ENCODE measurements at regions of chr5 and their contacts with region 1.

Region 1: GRCh38 chr5:126506079-126506478 is 82.9 kb downstream of the GRAMD2B start:
- DNase-seq: peak in 1 of 2 donors; percentile 37
- ATAC-seq: peak in 7 of 8 donors; percentile 39 to 84 (median 57)
- H3K4me3 ChIP-seq: no peak overlapping the region
- H3K27ac ChIP-seq: peak overlapping the region; percentile 28 to 85 (median 65)
- H3K4me1 ChIP-seq: peaks cover 0 to 45% (median 28%) of the 10 kb centered on the region in 9 donors
- H3K27me3 ChIP-seq: no peaks in the 10 kb centered on the region
- CTCF ChIP-seq: no peak

Region 2: DNA sequence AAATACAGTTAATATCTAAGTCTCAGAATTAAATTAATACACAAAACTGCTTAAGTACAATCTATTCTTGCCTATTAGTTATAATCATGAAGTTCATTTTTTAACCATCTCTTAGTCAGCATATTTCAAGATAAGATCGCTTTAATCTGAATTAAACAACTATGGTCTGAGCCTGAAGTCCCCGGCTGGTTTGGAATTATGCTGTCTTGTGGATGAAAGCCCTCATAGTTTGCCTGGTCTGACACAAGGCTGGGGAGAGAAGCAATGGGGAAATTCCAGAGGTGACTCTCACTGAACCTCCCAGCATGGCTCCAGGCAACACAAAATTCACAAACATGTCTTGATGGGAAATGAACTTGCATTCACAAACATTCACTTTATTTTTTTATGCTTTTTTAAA is 110.9 kb before region 1 on chr5:
- intact Hi-C with region 1: no loop called
- DNase-seq: no peak
- ATAC-seq: no peak
- H3K4me3 ChIP-seq: no peak overlapping the region
- H3K27ac ChIP-seq: no peak overlapping the region
- H3K4me1 ChIP-seq: no peaks in the 10 kb centered on the region
- H3K27me3 ChIP-seq: no peaks in the 10 kb centered on the region
- CTCF ChIP-seq: no peak

Region 3: DNA sequence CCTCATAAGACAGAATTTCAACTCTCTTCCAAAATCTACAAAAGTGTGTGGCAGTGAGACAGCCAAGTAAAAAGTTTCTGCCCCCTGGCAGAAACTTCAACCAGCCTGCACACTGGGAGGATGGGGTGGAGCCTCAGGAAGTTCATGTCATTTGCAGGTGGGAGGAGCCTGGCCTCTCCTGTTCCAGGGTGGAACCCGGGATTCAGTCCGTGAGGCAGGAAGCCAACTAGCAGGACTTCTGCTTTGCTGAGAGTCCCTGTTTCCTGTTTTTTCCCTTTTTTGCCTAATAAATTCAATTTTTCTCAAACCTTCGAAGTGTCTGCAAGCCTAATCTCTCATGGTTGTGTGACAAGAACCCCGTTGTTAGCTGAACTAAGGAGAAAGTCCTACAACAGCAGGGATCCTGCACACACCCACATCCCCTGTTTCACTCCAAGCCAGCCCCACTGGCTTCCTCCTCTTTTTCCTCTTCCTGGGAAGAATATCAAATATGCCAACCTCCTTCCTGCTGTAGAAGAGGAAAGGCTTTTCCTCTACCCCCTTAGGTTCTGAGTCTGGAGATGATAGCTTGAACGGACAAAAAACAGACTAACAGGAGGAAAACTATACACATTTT is 19.7 kb after region 1 on chr5:
- intact Hi-C with region 1: loop called in 1 of 10 experiments (anchors 1 kb)
- DNase-seq: peak; percentile 69 to 71
- ATAC-seq: peak; percentile 74 to 93 (median 88)
- H3K4me3 ChIP-seq: peak overlapping the region in 1 of 10 donors; percentile 25
- H3K27ac ChIP-seq: peak overlapping the region; percentile 45 to 83 (median 70)
- H3K4me1 ChIP-seq: peaks cover 0 to 26% (median 15%) of the 10 kb centered on the region in 9 donors
- H3K27me3 ChIP-seq: no peaks in the 10 kb centered on the region
- CTCF ChIP-seq: no peak

Region 4: DNA sequence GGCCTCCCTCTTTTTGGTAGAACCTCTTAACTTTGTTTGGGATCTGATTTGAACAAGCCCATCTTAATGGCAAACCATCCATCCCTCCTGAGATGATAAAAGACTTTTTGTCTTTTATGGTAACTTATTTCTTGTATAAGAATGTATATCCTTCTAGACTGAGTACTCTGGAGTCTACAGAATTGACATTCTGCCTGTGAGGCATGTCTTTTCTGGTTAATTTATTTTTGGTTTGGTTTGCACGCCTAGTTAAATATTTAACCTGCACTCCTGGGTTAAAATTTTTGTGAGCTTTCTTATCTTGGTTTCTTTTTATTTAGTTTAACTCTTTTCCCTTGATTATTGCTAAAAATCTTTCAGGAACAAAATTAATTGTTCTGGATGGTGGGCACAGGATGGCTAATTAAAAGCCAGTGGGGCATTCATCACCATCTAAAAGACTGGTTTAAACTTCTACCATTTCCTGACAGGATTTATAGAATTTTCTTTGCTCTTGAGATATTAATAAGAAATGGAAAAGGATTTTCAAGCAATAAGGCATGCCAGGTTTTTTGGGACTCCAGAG is 145.0 kb after region 1 on chr5:
- intact Hi-C with region 1: no loop called
- DNase-seq: no peak
- ATAC-seq: no peak
- H3K4me3 ChIP-seq: no peak overlapping the region
- H3K27ac ChIP-seq: no peak overlapping the region
- H3K4me1 ChIP-seq: no peaks in the 10 kb centered on the region
- H3K27me3 ChIP-seq: peaks cover 0 to 10% (median 0%) of the 10 kb centered on the region in 7 donors
- CTCF ChIP-seq: no peak

Region 5: GRCh38 chr5:126707080-126707479 is 201.0 kb after region 1 on chr5:
- intact Hi-C with region 1: no loop called
- DNase-seq: no peak
- ATAC-seq: no peak
- H3K4me3 ChIP-seq: no peak overlapping the region
- H3K27ac ChIP-seq: no peak overlapping the region
- H3K4me1 ChIP-seq: no peaks in the 10 kb centered on the region
- H3K27me3 ChIP-seq: peaks cover 0 to 8% (median 0%) of the 10 kb centered on the region in 7 donors
- CTCF ChIP-seq: no peak